ENCODE measurements at regions of chr2 and their contacts with region 1.

Region 1: DNA sequence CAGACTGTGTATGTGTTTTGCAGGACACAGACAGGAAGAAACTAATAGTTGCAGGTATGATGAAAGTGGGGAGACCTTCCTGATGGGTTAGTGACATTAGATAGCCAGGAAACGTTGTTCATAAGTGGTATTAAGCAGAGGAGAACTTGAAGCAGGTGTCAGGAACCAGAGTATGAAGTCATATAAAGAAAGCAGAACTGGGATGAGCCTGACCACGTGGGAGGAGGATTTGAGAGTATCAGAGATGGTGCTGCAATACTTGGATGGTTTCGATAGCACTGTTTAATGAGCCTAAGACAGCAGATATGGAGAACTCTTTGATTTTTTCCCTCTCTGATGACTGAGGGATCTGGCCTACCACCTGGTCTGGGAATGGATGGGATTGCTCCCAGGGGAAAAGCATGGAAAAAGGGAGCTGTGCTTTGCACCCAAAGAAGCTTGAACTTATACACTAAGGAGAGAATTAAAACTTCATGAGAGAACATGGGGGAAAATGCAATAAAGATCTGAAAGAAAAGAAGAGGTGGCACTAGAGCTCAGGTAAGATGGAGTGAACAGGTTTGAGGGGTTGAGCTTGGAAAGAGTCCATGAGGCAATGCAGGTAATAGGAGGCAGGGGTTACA is 226.0 kb upstream of the LRRTM1 start:
- DNase-seq: peak; percentile 82
- ATAC-seq: peak; percentile 76
- H3K4me3 ChIP-seq: no peak overlapping the region
- H3K27ac ChIP-seq: peak overlapping the region; percentile 92
- H3K4me1 ChIP-seq: peaks cover 40% of the 10 kb centered on the region
- H3K27me3 ChIP-seq: no peaks in the 10 kb centered on the region
- CTCF ChIP-seq: no peak
- EP300 ChIP-seq: peak; percentile 86 to 96
- POLR2A ChIP-seq: no peak
- RAD21 ChIP-seq: no peak

Region 2: GRCh38 chr2:80293039-80293438 is 237.5 kb before region 1 on chr2:
- CTCF ChIA-PET with region 1: no interaction called
- POLR2A ChIA-PET with region 1: no interaction called
- RAD21 ChIA-PET with region 1: no interaction called
- SMC1A ChIA-PET with region 1: no interaction called
- in situ Hi-C with region 1: no loop called
- intact Hi-C with region 1: no loop called
- DNase-seq: no peak
- ATAC-seq: no peak
- H3K4me3 ChIP-seq: no peak overlapping the region
- H3K27ac ChIP-seq: no peak overlapping the region
- H3K4me1 ChIP-seq: no peaks in the 10 kb centered on the region
- H3K27me3 ChIP-seq: no peaks in the 10 kb centered on the region
- CTCF ChIP-seq: no peak
- EP300 ChIP-seq: no peak
- POLR2A ChIP-seq: no peak
- RAD21 ChIP-seq: no peak

Region 3: DNA sequence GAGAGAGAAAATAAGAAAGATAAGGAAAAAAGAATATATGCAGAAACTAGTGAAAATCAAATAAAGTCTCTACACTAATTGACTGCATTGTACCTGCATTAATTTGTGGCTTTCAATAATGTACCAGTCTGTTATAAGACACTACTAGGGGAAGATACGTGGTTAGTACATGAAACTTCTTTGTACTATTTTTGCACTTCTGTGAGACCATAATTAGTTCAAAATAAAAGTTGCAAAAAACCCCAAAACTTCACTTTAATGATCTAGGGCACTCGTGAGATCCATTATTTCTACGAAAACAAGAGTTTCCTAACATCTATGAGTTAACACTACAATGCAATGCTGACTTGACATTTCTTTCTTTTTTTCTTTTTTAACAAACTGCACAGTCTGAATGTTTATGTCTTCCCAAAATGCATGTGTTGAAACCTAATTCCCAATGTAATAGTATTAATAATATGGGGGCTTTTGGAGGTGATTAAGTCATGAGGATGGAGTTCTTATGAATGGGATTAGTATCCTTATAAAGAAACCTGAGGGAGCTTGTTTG is 63.2 kb before region 1 on chr2:
- CTCF ChIA-PET with region 1: interaction called, 7 read pairs
- POLR2A ChIA-PET with region 1: interaction called, 56 read pairs
- RAD21 ChIA-PET with region 1: interaction called, 48 read pairs
- SMC1A ChIA-PET with region 1: interaction called, 38 read pairs
- in situ Hi-C with region 1: no loop called
- intact Hi-C with region 1: loop called (anchors 2 kb)
- DNase-seq: no peak
- ATAC-seq: peak; percentile 35
- H3K4me3 ChIP-seq: no peak overlapping the region
- H3K27ac ChIP-seq: peak overlapping the region; percentile 44
- H3K4me1 ChIP-seq: peaks cover 5% of the 10 kb centered on the region
- H3K27me3 ChIP-seq: no peaks in the 10 kb centered on the region
- CTCF ChIP-seq: no peak
- EP300 ChIP-seq: peak in 1 of 2 experiments; percentile 66; a peak in 2 of 4 replicates
- POLR2A ChIP-seq: no peak
- RAD21 ChIP-seq: no peak

Region 4: DNA sequence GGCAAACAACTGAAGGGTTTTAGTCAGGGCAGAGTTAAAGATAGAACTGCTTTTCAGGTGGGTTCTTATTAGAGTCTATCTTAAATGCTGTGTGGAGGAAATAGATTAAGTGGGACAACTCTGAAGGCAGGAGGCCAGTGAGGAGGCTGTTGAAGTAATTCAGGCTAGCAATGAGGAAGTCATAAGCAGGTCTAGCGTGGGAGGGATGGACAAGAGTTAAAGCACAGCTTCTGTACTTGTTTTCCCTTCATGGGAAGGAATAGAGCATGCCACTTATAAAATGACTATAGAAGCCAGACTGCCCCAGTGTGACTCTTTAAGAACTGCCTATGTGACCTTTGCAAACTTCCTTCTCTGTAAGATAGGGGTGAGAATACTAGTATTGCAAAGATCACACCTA is 24.0 kb before region 1 on chr2:
- CTCF ChIA-PET with region 1: interaction called, 243 read pairs
- POLR2A ChIA-PET with region 1: interaction called, 36 read pairs
- RAD21 ChIA-PET with region 1: interaction called, 276 read pairs
- SMC1A ChIA-PET with region 1: interaction called, 360 read pairs
- in situ Hi-C with region 1: no loop called
- intact Hi-C with region 1: no loop called
- DNase-seq: no peak
- ATAC-seq: peak; percentile 62
- H3K4me3 ChIP-seq: no peak overlapping the region
- H3K27ac ChIP-seq: no peak overlapping the region
- H3K4me1 ChIP-seq: no peaks in the 10 kb centered on the region
- H3K27me3 ChIP-seq: no peaks in the 10 kb centered on the region
- CTCF ChIP-seq: no peak
- EP300 ChIP-seq: no peak
- POLR2A ChIP-seq: no peak
- RAD21 ChIP-seq: no peak

Region 5: DNA sequence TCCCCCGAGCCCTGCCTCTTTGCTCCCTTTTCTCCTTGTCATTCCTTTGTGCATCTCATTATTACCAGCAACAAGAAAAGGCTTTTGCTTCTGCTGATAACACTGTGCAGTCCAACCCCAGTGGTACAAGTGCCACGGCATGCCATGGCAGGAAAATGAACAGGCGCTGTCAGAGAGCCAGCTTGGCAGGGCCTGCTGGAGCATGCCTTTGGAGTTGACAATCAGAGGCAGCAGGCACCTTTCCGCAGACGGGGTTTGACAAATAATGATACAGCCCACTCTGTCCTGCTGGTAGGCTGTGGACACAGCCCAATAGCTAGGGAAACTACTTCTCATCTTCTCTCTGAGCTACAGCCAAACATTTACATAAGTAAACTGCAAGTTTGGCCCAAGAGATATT is 17.9 kb after region 1 on chr2:
- CTCF ChIA-PET with region 1: interaction called, 3 read pairs
- POLR2A ChIA-PET with region 1: interaction called, 3 read pairs
- RAD21 ChIA-PET with region 1: interaction called, 4 read pairs
- SMC1A ChIA-PET with region 1: interaction called, 36 read pairs
- in situ Hi-C with region 1: no loop called
- intact Hi-C with region 1: no loop called
- DNase-seq: no peak
- ATAC-seq: no peak
- H3K4me3 ChIP-seq: no peak overlapping the region
- H3K27ac ChIP-seq: no peak overlapping the region
- H3K4me1 ChIP-seq: no peaks in the 10 kb centered on the region
- H3K27me3 ChIP-seq: no peaks in the 10 kb centered on the region
- CTCF ChIP-seq: no peak
- EP300 ChIP-seq: no peak
- POLR2A ChIP-seq: no peak
- RAD21 ChIP-seq: no peak

Region 6: GRCh38 chr2:81528852-81529480 is 998.4 kb after region 1 on chr2:
- CTCF ChIA-PET with region 1: no interaction called
- POLR2A ChIA-PET with region 1: no interaction called
- RAD21 ChIA-PET with region 1: no interaction called
- SMC1A ChIA-PET with region 1: no interaction called
- in situ Hi-C with region 1: no loop called
- intact Hi-C with region 1: loop called (anchors 10 kb)
- DNase-seq: peak; percentile 26
- ATAC-seq: peak; percentile 93
- H3K4me3 ChIP-seq: no peak overlapping the region
- H3K27ac ChIP-seq: no peak overlapping the region
- H3K4me1 ChIP-seq: no peaks in the 10 kb centered on the region
- H3K27me3 ChIP-seq: no peaks in the 10 kb centered on the region
- CTCF ChIP-seq: no peak
- EP300 ChIP-seq: peak; percentile 75 to 84; a peak in 3 of 4 replicates
- POLR2A ChIP-seq: no peak
- RAD21 ChIP-seq: no peak